H1 (cell line): ENCODE measurements at regions of chrX and their contacts with region 1.

Region 1: DNA sequence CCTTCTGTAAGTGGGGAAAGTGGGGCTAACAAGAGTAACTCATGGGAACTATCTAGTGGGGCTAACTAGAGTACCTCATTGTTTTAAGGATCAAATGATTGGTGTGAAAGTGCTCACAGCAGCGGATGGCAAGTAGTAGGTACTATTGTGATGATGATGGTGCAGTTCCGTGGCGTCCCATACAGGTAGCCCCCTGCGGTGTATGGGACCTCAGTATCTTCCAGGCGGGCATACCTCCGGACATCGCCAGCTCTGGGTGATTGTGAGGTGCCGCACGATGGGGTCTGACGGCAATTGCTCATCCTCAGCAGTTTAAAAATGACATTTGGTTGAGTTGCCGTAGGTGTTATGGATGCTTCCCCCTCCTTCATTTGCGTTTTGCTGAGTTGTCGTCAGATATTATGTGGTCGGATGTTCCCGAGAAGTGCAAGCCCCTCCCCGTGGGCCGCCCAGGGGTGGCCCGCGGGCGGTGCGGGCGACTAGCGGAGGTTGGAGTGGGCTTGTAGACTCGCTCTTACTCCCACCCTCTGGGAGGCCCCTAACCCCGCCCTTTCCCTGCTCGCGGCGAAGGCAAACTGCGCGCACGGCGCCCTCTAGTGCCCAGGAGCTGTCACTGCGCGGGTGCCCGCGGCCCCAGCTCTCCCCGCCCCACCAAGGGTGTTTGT is 18.3 kb upstream of the GPR101 start:
- DNase-seq: peak in 1 of 2 experiments; percentile 88
- H3K4me3 ChIP-seq: peak overlapping the region; percentile 33 to 66 (median 51); a peak in 7 of 8 replicates
- H3K27ac ChIP-seq: no peak overlapping the region
- H3K4me1 ChIP-seq: no peaks in the 10 kb centered on the region
- H3K27me3 ChIP-seq: peaks cover 7 to 30% (median 19%) of the 10 kb centered on the region in 4 experiments
- CTCF ChIP-seq: peak; percentile 69 to 79 (median 75)
- EP300 ChIP-seq: no peak
- POLR2A ChIP-seq: no peak
- RAD21 ChIP-seq: peak; percentile 69 to 76

Region 2: DNA sequence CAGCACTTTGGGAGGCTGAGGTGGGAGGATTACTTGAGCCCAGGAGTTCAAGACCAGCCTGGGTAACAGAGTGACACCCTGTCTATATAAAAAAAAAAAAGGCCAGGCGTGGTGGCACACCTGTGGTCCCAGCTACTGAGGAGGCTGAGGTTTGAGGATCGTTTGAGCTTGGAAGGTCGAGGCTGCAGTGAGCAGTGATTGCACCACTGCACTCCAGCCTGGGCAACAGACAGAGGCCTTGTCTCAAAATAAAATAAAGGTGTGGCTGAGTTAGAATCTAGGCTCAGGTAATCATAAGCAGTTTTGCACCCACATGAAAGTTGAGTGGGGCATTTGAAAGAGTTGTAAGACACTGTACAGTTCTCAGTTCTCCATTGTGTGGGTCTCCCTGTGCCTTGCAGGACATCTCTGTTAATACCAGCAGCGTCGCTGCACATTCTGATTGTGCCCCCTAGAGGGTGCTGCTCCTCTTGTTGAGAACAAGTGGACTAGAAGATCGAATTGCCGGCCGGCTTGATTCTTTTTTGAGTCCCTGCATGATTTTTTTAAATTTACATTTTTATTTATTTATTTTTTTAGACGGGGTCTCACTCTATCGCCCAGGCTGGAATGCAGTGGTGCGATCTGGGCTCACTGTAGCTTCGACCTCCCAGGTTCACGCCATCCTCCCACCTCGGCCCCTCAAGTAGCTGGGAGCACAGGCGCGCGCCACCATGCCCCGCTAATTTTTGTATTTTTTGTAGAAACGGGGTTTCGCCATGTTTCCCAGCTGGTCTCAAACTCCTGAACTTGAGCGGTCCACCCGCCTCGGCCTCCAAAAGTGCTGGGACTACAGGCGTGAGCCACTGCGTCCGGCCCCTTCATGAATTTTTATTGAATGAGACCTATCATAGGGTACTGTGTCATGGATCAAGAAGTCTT is 98.0 kb before region 1 on chrX:
- CTCF ChIA-PET with region 1: interaction called, 26 read pairs
- POLR2A ChIA-PET with region 1: no interaction called
- DNase-seq: peak; percentile 21 to 52
- H3K4me3 ChIP-seq: no peak overlapping the region
- H3K27ac ChIP-seq: no peak overlapping the region
- H3K4me1 ChIP-seq: no peaks in the 10 kb centered on the region
- H3K27me3 ChIP-seq: no peaks in the 10 kb centered on the region
- CTCF ChIP-seq: peak; percentile 54 to 61 (median 56)
- EP300 ChIP-seq: no peak
- POLR2A ChIP-seq: no peak
- RAD21 ChIP-seq: peak; percentile 54 to 65

Region 3: DNA sequence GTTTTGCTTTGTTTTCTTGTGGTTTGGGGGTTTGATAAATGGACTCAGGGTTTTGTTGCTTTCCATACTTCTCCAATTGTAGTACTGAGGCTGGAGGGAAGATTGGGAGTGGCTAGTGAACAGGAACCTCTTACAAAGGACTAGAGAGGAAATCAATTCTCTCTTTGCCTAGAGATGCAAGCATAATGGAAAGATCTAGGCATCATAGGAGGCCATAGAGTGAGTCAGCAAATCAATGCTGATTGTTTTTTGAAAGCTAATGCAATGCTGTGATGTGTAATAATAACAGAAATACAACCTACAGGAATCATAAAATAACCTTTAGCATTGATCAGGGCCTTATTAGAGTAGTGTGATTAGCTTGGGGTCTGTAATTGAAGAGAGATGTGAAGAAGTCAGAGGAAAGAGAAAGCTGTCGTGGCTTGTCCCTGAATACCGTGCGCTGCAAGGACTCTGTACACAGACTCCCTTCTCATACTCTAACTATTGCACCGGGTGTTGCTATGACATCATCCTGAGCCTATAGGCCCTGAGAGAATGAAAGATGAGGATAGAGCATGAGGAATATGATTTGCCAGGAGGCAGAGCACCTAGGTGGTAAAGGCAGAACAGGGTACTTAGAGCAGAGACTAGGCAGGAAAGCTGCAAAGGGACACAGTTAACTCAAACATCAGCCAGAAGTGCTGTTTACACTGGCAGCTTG is 11.0 kb after region 1 on chrX:
- CTCF ChIA-PET with region 1: interaction called, 15 read pairs
- POLR2A ChIA-PET with region 1: no interaction called
- DNase-seq: no peak
- H3K4me3 ChIP-seq: no peak overlapping the region
- H3K27ac ChIP-seq: no peak overlapping the region
- H3K4me1 ChIP-seq: no peaks in the 10 kb centered on the region
- H3K27me3 ChIP-seq: no peaks in the 10 kb centered on the region
- CTCF ChIP-seq: no peak
- EP300 ChIP-seq: no peak
- POLR2A ChIP-seq: no peak
- RAD21 ChIP-seq: no peak